Activated CD4-positive, alpha-beta T cell treated with anti-CD3 and anti-CD28 coated beads, Interleukin-2, amount 10 ng/mL, durations not matched to agents 24 days and 14 days (primary cell): ENCODE measurements at regions of chr5 and their contacts with region 1.

Region 1: GRCh38 chr5:115625579-115626444 is at the start of gene TMED7:
- DNase-seq: peak; percentile 100
- H3K4me3 Mint-ChIP-seq: no peak within 1 kb of the TSS
- H3K27ac Mint-ChIP-seq: peak within 1 kb of the TSS; percentile 88
- H3K4me1 Mint-ChIP-seq: peaks cover 19% of the 10 kb centered on the region
- H3K27me3 Mint-ChIP-seq: peaks cover 10% of the 10 kb centered on the region
- total RNA-seq, gene TMED7: 40.9 and 41.9 TPM in 2 replicates

Region 2: DNA sequence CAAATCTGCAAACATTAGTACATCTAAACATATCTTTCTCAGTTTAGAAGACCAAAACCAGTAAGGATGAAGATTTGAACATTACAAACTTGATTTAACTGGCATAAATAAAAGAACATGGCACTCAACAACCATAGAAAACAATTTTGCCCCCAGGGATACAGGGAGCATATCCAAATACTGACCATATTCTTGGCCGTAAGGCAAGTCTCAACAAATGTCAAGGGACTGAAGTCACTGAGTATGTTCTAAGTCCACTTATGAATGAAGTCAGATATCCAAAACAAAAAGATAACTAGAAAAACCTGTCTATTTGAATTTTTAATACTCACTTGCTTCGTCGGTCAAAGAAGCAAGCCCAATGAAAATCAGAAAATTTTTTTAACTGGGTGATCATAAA is 95.4 kb before region 1 on chr5:
- intact Hi-C with region 1: no loop called
- DNase-seq: no peak
- H3K4me3 Mint-ChIP-seq: no peak overlapping the region
- H3K27ac Mint-ChIP-seq: no peak overlapping the region
- H3K4me1 Mint-ChIP-seq: peaks cover 31% of the 10 kb centered on the region
- H3K27me3 Mint-ChIP-seq: no peaks in the 10 kb centered on the region

Region 3: DNA sequence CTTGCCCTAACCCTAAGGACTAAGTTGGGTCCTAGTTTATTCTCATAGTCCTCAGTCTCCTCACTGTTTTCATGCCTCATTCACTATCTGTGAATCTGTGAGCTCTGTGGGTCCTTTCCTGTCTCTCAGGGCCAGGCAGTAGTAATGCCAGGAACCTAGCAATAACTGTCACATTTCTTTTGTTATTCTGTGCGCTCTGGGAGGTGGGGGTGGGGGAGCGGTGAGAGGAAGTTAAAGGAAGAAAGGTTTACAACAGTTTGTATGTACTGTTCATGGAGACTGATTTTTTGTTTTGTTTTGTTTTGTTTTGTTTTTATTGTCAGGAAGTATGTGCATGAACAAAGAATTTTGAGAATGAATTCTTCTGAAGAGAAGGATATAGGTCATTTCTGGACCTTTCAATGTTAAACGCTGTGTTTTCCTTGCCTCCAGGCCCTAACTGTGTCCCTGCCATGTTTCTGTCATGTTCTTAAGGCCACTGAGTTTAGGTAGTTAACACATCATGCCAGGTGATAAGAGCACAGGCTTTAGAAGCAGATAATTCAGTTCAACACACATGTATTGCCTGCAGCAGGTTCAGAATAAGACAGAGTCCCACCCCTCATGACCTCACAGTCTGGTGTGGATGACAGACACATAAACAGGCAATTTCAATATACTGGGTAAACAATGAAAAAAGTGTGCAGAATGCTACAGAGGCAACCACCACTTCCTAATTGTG is 68.0 kb before region 1 on chr5:
- intact Hi-C with region 1: no loop called
- DNase-seq: no peak
- H3K4me3 Mint-ChIP-seq: no peak overlapping the region
- H3K27ac Mint-ChIP-seq: no peak overlapping the region
- H3K4me1 Mint-ChIP-seq: peaks cover 9% of the 10 kb centered on the region
- H3K27me3 Mint-ChIP-seq: peaks cover 14% of the 10 kb centered on the region

Region 4: GRCh38 chr5:115601701-115602590 is 23.9 kb before region 1 on chr5 and contains the start of gene TICAM2:
- intact Hi-C with region 1: loop called (anchors 1 kb)
- DNase-seq: peak; percentile 90
- H3K4me3 Mint-ChIP-seq: peak within 1 kb of the TSS; percentile 47
- H3K27ac Mint-ChIP-seq: peak within 1 kb of the TSS; percentile 62
- H3K4me1 Mint-ChIP-seq: peaks cover 25% of the 10 kb centered on the region
- H3K27me3 Mint-ChIP-seq: no peaks in the 10 kb centered on the region
- total RNA-seq, gene TICAM2: 0.86 and 1.0 TPM in 2 replicates

Region 5: DNA sequence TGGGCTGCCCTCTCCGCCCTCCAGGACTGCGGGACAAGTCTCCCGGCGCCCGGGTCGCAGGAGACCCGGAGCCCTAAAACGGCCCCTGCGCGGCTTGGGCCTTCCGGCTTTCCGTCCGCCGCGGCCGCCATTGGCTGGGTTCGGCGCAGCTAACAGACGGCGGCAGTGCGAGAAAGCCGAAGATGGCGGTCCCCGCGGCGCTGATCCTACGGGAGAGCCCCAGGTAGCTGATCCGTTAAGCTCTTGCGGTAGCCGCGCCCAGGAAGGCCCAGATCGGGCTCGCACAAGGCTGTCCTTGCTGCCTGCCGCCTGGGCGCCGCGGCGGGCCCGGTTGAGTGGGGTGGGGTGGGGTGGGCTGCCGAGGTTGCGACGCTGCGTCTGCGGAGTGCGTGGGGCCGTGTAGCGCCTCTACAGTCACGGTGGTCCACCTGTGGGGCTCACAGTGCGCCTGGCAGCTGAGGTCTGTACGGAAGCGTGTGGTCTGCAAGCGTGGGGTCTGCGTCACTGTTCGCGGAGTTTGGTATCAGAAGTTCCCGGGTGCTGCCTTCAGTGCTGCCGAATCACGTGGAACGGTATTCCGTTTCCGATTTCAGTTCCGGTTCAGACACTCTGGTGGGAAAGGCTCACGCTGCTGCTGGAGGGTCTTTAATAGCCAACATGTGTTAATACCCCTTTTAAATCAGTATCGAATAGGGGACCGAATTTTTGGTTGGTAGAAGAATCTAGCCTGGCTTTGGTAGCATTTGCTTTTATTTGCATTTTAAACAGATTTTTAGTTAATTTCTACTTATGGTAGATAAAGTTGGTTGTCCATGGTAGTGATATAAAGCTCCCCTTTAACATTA is 459.3 kb after region 1 on chr5 and contains the start of gene COMMD10:
- intact Hi-C with region 1: loop called (anchors 1 kb)
- DNase-seq: peak; percentile 94
- H3K4me3 Mint-ChIP-seq: peak within 1 kb of the TSS; percentile 88
- H3K27ac Mint-ChIP-seq: peak within 1 kb of the TSS; percentile 91
- H3K4me1 Mint-ChIP-seq: peaks cover 26% of the 10 kb centered on the region
- H3K27me3 Mint-ChIP-seq: peaks cover 2% of the 10 kb centered on the region
- total RNA-seq, gene COMMD10: 22.2 and 24.4 TPM in 2 replicates